CD4-positive, alpha-beta memory T cell (primary cell): ENCODE measurements at regions of chr10 and their contacts with region 1.

Region 1: GRCh38 chr10:3805791-3806461 is 20.9 kb upstream of the KLF6 start:
- DNase-seq: peak; percentile 42 to 84 (median 55)
- H3K4me3 ChIP-seq: peak overlapping the region; percentile 2 to 41
- H3K4me3 Mint-ChIP-seq: peak overlapping the region in 7 of 8 donors; percentile 38 to 85 (median 76)
- H3K27ac ChIP-seq: peak overlapping the region; percentile 99
- H3K27ac Mint-ChIP-seq: no peak overlapping the region
- H3K4me1 ChIP-seq: peaks cover 98% of the 10 kb centered on the region
- H3K4me1 Mint-ChIP-seq: peaks cover 4 to 75% (median 69%) of the 10 kb centered on the region in 4 donors
- H3K27me3 ChIP-seq: no peaks in the 10 kb centered on the region
- H3K27me3 Mint-ChIP-seq: no peaks in the 10 kb centered on the region

Region 2: DNA sequence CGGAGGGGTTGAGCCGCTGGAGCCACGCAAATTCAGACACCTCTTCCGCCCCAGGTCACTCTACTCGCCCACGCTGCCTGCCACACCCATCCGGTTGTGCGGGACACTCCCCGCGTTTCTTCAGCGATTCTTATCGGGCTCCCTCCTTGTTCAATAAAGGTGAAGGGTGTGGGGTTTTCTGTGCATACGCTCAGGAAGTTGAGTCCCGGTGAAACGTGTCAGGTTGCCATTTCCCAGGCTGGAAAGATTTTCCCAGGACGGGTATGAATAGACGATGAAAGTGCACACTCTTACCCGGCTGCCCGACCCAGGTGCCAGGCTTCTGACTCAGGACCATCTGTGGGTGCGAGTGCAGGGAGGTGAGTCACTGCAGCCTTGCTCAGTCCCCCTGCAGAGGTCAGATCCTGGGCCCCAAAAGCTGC is 42.9 kb before region 1 on chr10:
- CTCF ChIA-PET with region 1: no interaction called
- POLR2A ChIA-PET with region 1: interaction called, 12 read pairs
- intact Hi-C with region 1: no loop called
- DNase-seq: no peak
- H3K4me3 ChIP-seq: no peak overlapping the region
- H3K4me3 Mint-ChIP-seq: peak overlapping the region; percentile 20 to 72 (median 62)
- H3K27ac ChIP-seq: no peak overlapping the region
- H3K27ac Mint-ChIP-seq: peak overlapping the region in 6 of 7 donors; percentile 59 to 88 (median 82)
- H3K4me1 ChIP-seq: peaks cover 91% of the 10 kb centered on the region
- H3K4me1 Mint-ChIP-seq: peaks cover 53 to 92% (median 75%) of the 10 kb centered on the region in 4 donors
- H3K27me3 ChIP-seq: no peaks in the 10 kb centered on the region
- H3K27me3 Mint-ChIP-seq: no peaks in the 10 kb centered on the region

Region 3: GRCh38 chr10:3792710-3793219 is 13.2 kb before region 1 on chr10:
- CTCF ChIA-PET with region 1: no interaction called
- POLR2A ChIA-PET with region 1: interaction called, 27 read pairs
- intact Hi-C with region 1: no loop called
- DNase-seq: no peak
- H3K4me3 ChIP-seq: no peak overlapping the region
- H3K4me3 Mint-ChIP-seq: no peak overlapping the region
- H3K27ac ChIP-seq: no peak overlapping the region
- H3K27ac Mint-ChIP-seq: no peak overlapping the region
- H3K4me1 ChIP-seq: peaks cover 2% of the 10 kb centered on the region
- H3K4me1 Mint-ChIP-seq: peaks cover 3 to 9% (median 3%) of the 10 kb centered on the region in 4 donors
- H3K27me3 ChIP-seq: no peaks in the 10 kb centered on the region
- H3K27me3 Mint-ChIP-seq: no peaks in the 10 kb centered on the region

Region 4: DNA sequence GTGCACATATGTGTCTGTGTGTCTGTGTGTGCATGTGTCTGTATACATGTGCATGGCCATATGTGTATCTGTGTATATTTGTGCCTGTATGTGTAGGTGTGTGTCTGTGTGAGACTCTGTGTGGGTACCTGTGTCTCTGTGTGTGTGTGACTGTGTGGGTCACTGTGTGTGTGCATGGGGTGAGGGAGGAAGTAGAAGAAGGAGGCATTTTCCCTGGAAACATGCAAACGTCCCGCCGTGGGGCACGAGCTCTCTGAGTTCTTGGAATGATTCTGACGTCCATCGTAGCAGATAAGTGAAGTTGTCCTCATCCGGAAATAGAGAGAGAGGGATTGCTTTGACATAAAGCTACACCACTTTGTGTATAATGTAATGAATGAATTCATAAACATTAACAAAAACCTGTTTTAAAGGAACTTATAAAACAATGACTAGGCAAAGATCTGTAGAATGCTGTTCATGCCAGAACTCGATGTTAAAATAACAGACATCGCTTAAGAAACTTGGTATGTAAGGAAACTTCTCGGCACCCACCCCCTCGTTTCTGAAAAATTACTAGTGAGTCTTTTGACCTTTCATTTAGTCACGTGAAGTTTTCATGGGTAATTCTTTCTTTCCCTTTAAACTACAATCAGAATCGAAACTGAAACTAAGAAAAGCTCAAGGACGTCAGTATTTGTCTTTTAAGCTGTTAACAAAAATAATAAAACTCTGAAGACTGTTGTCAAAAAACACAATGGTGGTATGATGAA is 22.7 kb after region 1 on chr10:
- CTCF ChIA-PET with region 1: interaction called, 4 read pairs
- POLR2A ChIA-PET with region 1: interaction called, 304 read pairs
- intact Hi-C with region 1: loop called (anchors 1 kb)
- DNase-seq: peak; percentile 53 to 70 (median 62)
- H3K4me3 ChIP-seq: peak overlapping the region; percentile 32 to 55
- H3K4me3 Mint-ChIP-seq: peak overlapping the region; percentile 85 to 91 (median 88)
- H3K27ac ChIP-seq: peak overlapping the region; percentile 78
- H3K27ac Mint-ChIP-seq: peak overlapping the region; percentile 84 to 98 (median 95)
- H3K4me1 ChIP-seq: peaks cover 21% of the 10 kb centered on the region
- H3K4me1 Mint-ChIP-seq: peaks cover 21 to 43% (median 33%) of the 10 kb centered on the region in 4 donors
- H3K27me3 ChIP-seq: no peaks in the 10 kb centered on the region
- H3K27me3 Mint-ChIP-seq: no peaks in the 10 kb centered on the region

Region 5: GRCh38 chr10:3887885-3888476 is 82.1 kb after region 1 on chr10:
- CTCF ChIA-PET with region 1: interaction called, 3 read pairs
- POLR2A ChIA-PET with region 1: interaction called, 25 read pairs
- intact Hi-C with region 1: loop called (anchors 1 kb)
- DNase-seq: peak; percentile 70 to 94 (median 74)
- H3K4me3 ChIP-seq: no peak overlapping the region
- H3K4me3 Mint-ChIP-seq: peak overlapping the region; percentile 62 to 82 (median 70)
- H3K27ac ChIP-seq: peak overlapping the region; percentile 77
- H3K27ac Mint-ChIP-seq: peak overlapping the region; percentile 91 to 99 (median 98)
- H3K4me1 ChIP-seq: peaks cover 53% of the 10 kb centered on the region
- H3K4me1 Mint-ChIP-seq: peaks cover 23 to 68% (median 49%) of the 10 kb centered on the region in 4 donors
- H3K27me3 ChIP-seq: no peaks in the 10 kb centered on the region
- H3K27me3 Mint-ChIP-seq: no peaks in the 10 kb centered on the region

Region 6: DNA sequence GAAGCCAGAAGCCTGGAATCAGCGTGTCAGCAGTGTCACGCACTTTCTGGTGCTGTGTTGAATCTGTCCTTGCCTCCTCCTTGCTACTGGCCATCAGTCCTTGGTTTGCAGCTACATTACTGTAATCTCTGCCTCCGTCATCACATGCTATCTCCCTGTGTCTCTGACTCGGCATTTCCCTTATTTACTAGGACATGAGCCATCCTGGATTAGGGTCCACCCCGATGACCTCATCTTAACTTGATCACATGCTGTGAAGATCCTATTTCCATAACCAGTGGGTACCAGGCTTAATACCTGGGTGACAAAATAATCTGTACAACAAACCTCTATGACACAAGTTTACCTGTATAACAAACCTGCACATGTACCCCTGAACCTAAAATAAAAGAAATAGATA is 497.1 kb after region 1 on chr10:
- CTCF ChIA-PET with region 1: no interaction called
- POLR2A ChIA-PET with region 1: no interaction called
- intact Hi-C with region 1: no loop called
- DNase-seq: no peak
- H3K4me3 ChIP-seq: no peak overlapping the region
- H3K4me3 Mint-ChIP-seq: no peak overlapping the region
- H3K27ac ChIP-seq: no peak overlapping the region
- H3K27ac Mint-ChIP-seq: peak overlapping the region in 1 of 7 donors; percentile 9
- H3K4me1 ChIP-seq: no peaks in the 10 kb centered on the region
- H3K4me1 Mint-ChIP-seq: peaks cover 0 to 4% (median 0%) of the 10 kb centered on the region in 4 donors
- H3K27me3 ChIP-seq: no peaks in the 10 kb centered on the region
- H3K27me3 Mint-ChIP-seq: peaks cover 0 to 2% of the 10 kb centered on the region in 2 donors